ENCODE measurements at regions of chr5 and their contacts with region 1.

Region 1: DNA sequence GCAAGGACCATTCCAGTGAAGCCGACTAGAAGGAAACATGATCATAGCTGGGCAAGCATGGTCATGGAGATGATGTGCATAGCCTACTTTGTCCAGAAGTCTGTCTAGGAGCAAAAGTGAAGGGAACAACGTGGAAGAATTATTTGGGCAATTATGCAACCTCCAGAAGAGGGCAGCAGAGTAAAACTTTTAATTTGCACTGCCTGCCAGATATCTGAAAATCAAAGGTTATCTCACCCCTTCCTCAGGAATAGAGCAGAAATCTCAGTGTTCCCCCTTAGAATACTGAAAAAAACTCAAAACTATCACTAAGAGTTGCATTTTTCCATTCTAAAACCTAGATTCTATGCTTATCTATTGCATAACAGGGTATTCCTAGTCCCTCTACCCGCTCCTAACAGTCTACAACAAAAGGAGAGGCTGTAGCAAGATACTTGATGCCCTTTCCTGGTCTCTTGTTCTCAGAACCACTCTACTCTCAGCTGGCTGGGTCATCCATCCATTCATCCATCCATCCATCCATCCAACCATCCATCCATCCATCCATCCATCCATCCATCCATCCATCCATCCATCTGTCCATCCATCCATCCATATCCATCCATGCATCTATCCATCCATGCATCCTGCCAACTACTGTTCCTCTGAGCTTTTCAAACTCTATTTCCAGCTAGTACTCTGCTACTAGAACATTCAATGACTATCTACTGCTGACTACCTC is 8.4 kb upstream of the SETD9 start:
- H3K4me3 Mint-ChIP-seq: no peak overlapping the region
- H3K27ac Mint-ChIP-seq: no peak overlapping the region
- H3K4me1 Mint-ChIP-seq: peaks cover 6% of the 10 kb centered on the region
- H3K27me3 Mint-ChIP-seq: no peaks in the 10 kb centered on the region

Region 2: DNA sequence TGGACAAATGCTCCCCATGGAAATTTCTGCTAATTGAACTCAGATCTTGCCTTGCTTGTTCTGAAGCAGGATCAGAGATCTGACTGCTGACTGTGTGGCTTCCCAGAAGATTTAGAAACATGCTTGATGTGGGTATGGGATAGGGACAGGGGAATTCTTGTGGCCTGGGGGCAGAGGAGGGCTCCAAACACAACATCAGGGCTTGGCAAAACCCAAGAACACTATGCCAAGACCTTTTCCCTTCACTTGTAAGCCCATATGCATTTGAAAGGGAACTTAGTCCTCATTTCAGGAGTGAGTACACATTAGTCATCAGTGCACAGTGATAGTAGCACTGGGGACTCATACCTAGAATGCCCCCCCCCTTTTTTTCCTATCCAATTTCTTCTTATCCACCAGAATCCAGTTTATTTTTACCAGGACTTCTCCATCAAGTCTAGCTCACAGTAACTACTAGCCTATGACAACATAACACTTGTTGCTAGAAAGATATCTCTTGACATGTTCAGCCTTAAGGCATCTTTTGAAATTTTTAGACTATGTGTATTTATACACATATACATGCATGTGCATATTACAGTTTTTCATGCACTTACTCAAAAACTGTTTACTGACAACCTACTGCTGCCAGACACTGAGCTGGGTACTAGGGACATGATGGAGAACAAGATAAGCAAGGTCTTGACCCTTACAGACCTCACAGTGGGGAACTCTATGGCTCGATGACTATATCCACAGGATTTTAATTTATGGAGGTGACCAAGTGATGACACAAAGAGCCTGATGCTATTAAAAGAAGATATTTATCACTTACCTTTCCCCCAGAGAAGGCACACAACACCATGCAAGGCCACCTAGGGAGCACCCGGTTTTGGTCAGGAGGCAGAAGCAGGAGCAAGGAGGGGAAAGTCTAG is 243.9 kb before region 1 on chr5:
- intact Hi-C with region 1: no loop called
- H3K4me3 Mint-ChIP-seq: no peak overlapping the region
- H3K27ac Mint-ChIP-seq: no peak overlapping the region
- H3K4me1 Mint-ChIP-seq: peaks cover 45% of the 10 kb centered on the region
- H3K27me3 Mint-ChIP-seq: peaks cover 1% of the 10 kb centered on the region

Region 3: GRCh38 chr5:57082441-57083067 is 181.5 kb after region 1 on chr5:
- intact Hi-C with region 1: loop called (anchors 5 kb)
- H3K4me3 Mint-ChIP-seq: no peak overlapping the region
- H3K27ac Mint-ChIP-seq: no peak overlapping the region
- H3K4me1 Mint-ChIP-seq: no peaks in the 10 kb centered on the region
- H3K27me3 Mint-ChIP-seq: peaks cover 1% of the 10 kb centered on the region

Region 4: DNA sequence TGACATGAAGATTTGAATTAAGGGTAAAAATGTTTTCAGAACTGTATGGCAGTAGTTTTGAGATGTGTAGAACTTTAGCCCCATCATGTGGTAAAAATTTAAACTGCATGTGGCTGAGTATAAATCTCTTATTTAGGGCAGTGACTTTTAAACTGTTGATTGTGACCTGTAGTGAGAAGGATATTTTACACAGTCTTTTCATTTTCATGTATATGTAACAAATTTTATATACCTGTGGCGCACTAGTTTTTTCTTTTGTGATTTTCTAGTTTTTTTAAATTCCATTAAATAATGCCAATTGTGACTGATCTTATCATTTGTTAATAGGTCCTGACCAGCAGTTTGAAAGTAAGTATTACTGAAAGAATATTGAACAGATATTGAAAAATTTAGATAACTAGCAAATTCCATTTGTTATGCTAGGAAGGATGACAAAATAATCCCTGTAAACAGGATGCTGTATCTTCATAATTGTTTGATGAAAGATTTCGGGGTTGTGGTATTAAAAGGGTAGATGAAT is 320.1 kb after region 1 on chr5:
- intact Hi-C with region 1: loop called (anchors 2 kb)
- H3K4me3 Mint-ChIP-seq: no peak overlapping the region
- H3K27ac Mint-ChIP-seq: no peak overlapping the region
- H3K4me1 Mint-ChIP-seq: peaks cover 5% of the 10 kb centered on the region
- H3K27me3 Mint-ChIP-seq: no peaks in the 10 kb centered on the region